ENCODE measurements at regions of chr5 and their contacts with region 1.

Region 1: DNA sequence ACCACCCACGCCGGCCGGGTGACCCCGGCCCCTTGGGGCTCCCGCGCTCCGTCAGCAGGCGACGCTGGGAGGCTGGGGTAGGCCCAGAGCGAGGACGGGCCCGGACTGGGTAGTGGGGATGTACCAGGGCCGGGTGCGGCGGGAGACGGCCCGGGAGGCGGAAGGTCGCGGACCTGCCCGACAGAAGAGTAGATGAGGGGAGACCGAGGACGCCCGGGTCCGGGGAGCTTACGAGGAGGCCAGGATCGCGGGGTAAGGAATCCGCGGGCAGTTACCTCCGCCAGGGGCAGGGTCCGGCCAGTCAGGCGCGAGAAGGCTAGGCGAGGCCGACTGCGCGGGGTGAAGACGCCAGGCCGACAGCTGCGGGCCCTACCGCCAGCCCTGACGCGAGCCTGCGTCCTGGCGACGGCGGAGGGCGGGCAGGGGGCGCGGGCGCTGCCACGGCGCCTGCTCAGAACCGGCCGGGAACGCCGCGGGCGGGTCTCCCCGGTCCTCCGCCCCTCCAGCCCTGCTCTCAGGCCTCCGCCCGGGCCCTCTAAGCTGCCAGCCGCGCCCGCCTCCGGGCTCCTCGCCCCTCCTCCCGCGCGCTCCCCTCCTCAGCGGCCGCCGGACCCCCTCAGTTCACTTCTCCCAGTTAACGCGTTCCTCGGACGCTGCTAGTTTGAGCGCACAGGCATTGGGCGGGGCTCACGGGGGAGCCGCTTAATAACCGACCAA is at the start of gene CPLANE1:
- DNase-seq: peak; percentile 64
- H3K4me3 Mint-ChIP-seq: peak within 1 kb of the TSS; percentile 86
- H3K27ac Mint-ChIP-seq: peak within 1 kb of the TSS; percentile 97
- H3K4me1 Mint-ChIP-seq: peaks cover 6% of the 10 kb centered on the region
- H3K27me3 Mint-ChIP-seq: no peaks in the 10 kb centered on the region
- CTCF ChIP-seq: no peak
- total RNA-seq, gene CPLANE1: 23.6 and 25.1 TPM in 2 replicates

Region 2: DNA sequence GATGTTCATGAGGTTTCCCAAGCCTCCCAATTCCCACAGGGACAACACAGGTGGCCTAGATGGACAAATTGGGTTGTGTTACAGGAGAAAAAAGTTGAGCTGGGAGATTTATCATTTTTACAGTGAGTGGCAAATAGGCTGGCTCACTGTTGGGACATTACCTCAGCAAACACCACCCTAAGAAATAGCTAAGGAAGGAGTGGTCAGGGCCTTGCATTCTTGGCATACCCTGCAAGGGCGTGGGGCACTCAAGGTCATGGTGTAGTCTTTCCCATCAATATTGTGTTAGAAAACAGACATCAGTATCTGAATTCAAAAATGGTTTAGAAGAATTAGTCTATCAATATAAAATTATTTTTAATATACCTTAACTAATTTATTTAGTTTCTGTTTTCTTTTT is 23.4 kb after region 1 on chr5:
- CTCF ChIA-PET with region 1: interaction called, 10 read pairs
- POLR2A ChIA-PET with region 1: interaction called, 52 read pairs
- intact Hi-C with region 1: loop called (anchors 2 kb)
- DNase-seq: peak; percentile 66
- H3K4me3 Mint-ChIP-seq: no peak overlapping the region
- H3K27ac Mint-ChIP-seq: peak overlapping the region; percentile 81
- H3K4me1 Mint-ChIP-seq: peaks cover 13% of the 10 kb centered on the region
- H3K27me3 Mint-ChIP-seq: no peaks in the 10 kb centered on the region
- CTCF ChIP-seq: no peak

Region 3: DNA sequence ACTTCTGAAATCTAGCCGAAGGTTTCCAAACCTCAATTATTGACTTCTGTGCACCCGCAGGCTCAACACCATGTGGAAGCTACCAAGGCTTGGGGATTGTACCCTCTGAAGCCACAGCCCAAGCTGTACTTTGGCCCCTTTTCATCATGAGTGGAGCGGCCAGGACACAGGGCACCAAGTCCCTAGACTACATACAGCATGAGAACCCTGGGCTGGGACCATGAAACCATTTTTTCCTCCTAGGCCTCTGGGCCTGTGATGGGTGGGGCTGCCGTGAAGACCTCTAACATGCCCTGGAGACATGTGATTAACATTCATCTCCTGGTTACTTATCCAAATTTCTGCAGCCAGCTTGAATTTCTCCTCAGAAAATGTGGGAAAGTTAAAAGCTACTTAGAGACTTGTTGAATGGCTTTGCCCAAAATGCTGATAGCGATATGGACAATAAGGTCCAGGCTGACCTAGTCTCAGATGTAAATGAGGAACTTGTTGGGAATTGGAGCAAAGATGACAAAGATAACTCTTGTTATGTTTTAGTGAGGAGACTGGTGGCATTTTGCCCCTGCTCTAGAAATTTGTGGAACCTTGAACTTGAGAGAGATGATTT is 34.2 kb after region 1 on chr5:
- CTCF ChIA-PET with region 1: interaction called, 4 read pairs
- POLR2A ChIA-PET with region 1: interaction called, 11 read pairs
- intact Hi-C with region 1: no loop called
- DNase-seq: peak; percentile 3
- H3K4me3 Mint-ChIP-seq: no peak overlapping the region
- H3K27ac Mint-ChIP-seq: no peak overlapping the region
- H3K4me1 Mint-ChIP-seq: no peaks in the 10 kb centered on the region
- H3K27me3 Mint-ChIP-seq: no peaks in the 10 kb centered on the region
- CTCF ChIP-seq: no peak

Region 4: GRCh38 chr5:37370864-37371726 is 122.0 kb after region 1 on chr5 and contains the start of gene NUP155:
- CTCF ChIA-PET with region 1: no interaction called
- POLR2A ChIA-PET with region 1: interaction called, 17 read pairs
- intact Hi-C with region 1: loop called (anchors 2 kb)
- DNase-seq: peak; percentile 99
- H3K4me3 Mint-ChIP-seq: peak within 1 kb of the TSS; percentile 86
- H3K27ac Mint-ChIP-seq: peak within 1 kb of the TSS; percentile 93
- H3K4me1 Mint-ChIP-seq: peaks cover 12% of the 10 kb centered on the region
- H3K27me3 Mint-ChIP-seq: no peaks in the 10 kb centered on the region
- CTCF ChIP-seq: no peak
- total RNA-seq, gene NUP155: 29.9 and 32.0 TPM in 2 replicates

Region 5: GRCh38 chr5:37396352-37396751 is 147.2 kb after region 1 on chr5:
- CTCF ChIA-PET with region 1: no interaction called
- POLR2A ChIA-PET with region 1: no interaction called
- intact Hi-C with region 1: no loop called
- DNase-seq: no peak
- H3K4me3 Mint-ChIP-seq: no peak overlapping the region
- H3K27ac Mint-ChIP-seq: no peak overlapping the region
- H3K4me1 Mint-ChIP-seq: no peaks in the 10 kb centered on the region
- H3K27me3 Mint-ChIP-seq: no peaks in the 10 kb centered on the region
- CTCF ChIP-seq: no peak

Region 6: DNA sequence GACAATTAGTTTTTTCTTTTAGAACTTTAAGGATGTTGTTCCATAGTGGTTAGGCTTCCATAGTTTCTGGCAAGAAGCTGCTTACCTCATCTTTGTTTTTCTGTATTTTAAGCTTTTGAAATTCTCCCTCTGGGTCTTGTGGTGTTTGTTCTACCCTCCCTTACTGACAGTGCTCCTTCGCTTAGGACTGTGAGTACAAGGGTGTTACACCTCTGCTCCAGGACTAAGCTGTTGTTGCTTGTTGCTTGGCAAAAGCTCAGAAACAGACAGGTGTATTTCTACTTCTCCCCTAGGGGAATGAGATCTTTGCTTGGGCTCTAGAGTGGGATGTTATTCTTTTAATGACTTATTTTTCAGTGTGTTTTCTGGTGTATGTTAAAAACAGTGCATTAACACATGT is 355.2 kb after region 1 on chr5:
- CTCF ChIA-PET with region 1: no interaction called
- POLR2A ChIA-PET with region 1: no interaction called
- intact Hi-C with region 1: no loop called
- DNase-seq: no peak
- H3K4me3 Mint-ChIP-seq: no peak overlapping the region
- H3K27ac Mint-ChIP-seq: no peak overlapping the region
- H3K4me1 Mint-ChIP-seq: peaks cover 6% of the 10 kb centered on the region
- H3K27me3 Mint-ChIP-seq: no peaks in the 10 kb centered on the region
- CTCF ChIP-seq: no peak

Measured in MCF 10A (cell line).